Activated CD8-positive, alpha-beta memory T cell treated with anti-CD3 and anti-CD28 coated beads, Interleukin-2, amount 10 ng/mL, durations not matched to agents 7 days and 5 days (primary cell): ENCODE measurements at regions of chr22 and their contacts with region 1.

Region 1: GRCh38 chr22:40867109-40867508 is 5.2 kb upstream of the DNAJB7 start:
- DNase-seq: no peak
- ATAC-seq: no peak
- H3K4me3 Mint-ChIP-seq: no peak overlapping the region
- H3K27ac Mint-ChIP-seq: no peak overlapping the region
- H3K4me1 Mint-ChIP-seq: peaks cover 11% of the 10 kb centered on the region
- H3K27me3 Mint-ChIP-seq: no peaks in the 10 kb centered on the region

Region 2: DNA sequence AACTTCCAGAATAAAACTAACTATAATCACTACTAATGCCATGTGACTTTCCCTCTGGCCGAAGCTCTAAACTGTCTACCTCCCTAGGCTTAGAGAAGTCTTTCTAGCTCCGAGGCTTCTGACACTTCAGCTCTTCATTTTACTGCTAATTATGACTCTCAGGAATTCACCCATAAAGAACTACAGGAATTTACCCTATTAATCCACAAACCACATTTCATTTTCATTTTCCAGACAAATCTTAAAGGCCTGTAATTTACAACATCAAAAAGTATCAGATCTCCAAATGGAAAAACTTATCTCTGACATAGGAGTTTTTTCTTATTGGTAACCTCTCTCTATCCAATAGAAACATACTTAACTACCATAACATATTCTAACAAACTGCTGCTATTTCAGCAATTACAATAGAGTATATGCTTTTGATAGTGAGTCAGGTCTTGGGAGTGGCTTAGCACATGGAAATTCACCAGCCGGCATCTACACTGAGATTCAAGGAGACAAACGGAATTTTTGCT is 264.0 kb before region 1 on chr22:
- CTCF ChIA-PET with region 1: no interaction called
- DNase-seq: no peak
- ATAC-seq: no peak
- H3K4me3 Mint-ChIP-seq: no peak overlapping the region
- H3K27ac Mint-ChIP-seq: no peak overlapping the region
- H3K4me1 Mint-ChIP-seq: peaks cover 12% of the 10 kb centered on the region
- H3K27me3 Mint-ChIP-seq: no peaks in the 10 kb centered on the region

Region 3: GRCh38 chr22:40856513-40857308 is 10.4 kb before region 1 on chr22 and contains the starts of genes ST13 and XPNPEP3:
- CTCF ChIA-PET with region 1: interaction called, 14 read pairs
- DNase-seq: peak; percentile 98
- ATAC-seq: peak; percentile 94
- H3K4me3 Mint-ChIP-seq: peak within 1 kb of the TSS; percentile 93
- H3K27ac Mint-ChIP-seq: peak within 1 kb of the TSS; percentile 100
- H3K4me1 Mint-ChIP-seq: peaks cover 45% of the 10 kb centered on the region
- H3K27me3 Mint-ChIP-seq: no peaks in the 10 kb centered on the region
- total RNA-seq, gene ST13: 120 to 150 TPM
- total RNA-seq, gene XPNPEP3: 11.2 to 12.5 TPM